Naive thymus-derived CD4-positive, alpha-beta T cell (primary cell): ENCODE measurements at regions of chr11 and their contacts with region 1.

Region 1: GRCh38 chr11:9314291-9315036 is at the start of gene TMEM41B:
- DNase-seq: peak; percentile 98 to 100 (median 98)
- ATAC-seq: peak; percentile 98
- H3K4me3 ChIP-seq: peak within 1 kb of the TSS; percentile 90
- H3K4me3 Mint-ChIP-seq: peak within 1 kb of the TSS; percentile 97 to 100 (median 99)
- H3K27ac ChIP-seq: peak within 1 kb of the TSS; percentile 88
- H3K27ac Mint-ChIP-seq: peak within 1 kb of the TSS; percentile 96 to 99 (median 98)
- H3K4me1 ChIP-seq: peaks cover 16 to 23% of the 10 kb centered on the region in 2 donors
- H3K4me1 Mint-ChIP-seq: peaks cover 19 to 49% (median 44%) of the 10 kb centered on the region in 7 donors
- H3K27me3 ChIP-seq: no peaks in the 10 kb centered on the region
- H3K27me3 Mint-ChIP-seq: peaks cover 6 to 29% (median 11%) of the 10 kb centered on the region in 5 donors
- total RNA-seq, gene TMEM41B: 33.9 to 73.7 (median 49.0) TPM

Region 2: GRCh38 chr11:8688414-8689362 is 625.8 kb before region 1 on chr11:
- CTCF ChIA-PET with region 1: no interaction called
- POLR2A ChIA-PET with region 1: no interaction called
- intact Hi-C with region 1: loop called in 1 of 2 experiments (anchors 10 kb)
- DNase-seq: peak; percentile 50 to 86 (median 61)
- ATAC-seq: peak; percentile 92
- H3K4me3 ChIP-seq: peak overlapping the region; percentile 80
- H3K4me3 Mint-ChIP-seq: peak overlapping the region; percentile 89 to 99 (median 96)
- H3K27ac ChIP-seq: peak overlapping the region; percentile 85
- H3K27ac Mint-ChIP-seq: peak overlapping the region; percentile 90 to 99 (median 96)
- H3K4me1 ChIP-seq: peaks cover 15 to 17% of the 10 kb centered on the region in 2 donors
- H3K4me1 Mint-ChIP-seq: peaks cover 20 to 63% (median 45%) of the 10 kb centered on the region in 7 donors
- H3K27me3 ChIP-seq: no peaks in the 10 kb centered on the region
- H3K27me3 Mint-ChIP-seq: no peaks in the 10 kb centered on the region

Region 3: DNA sequence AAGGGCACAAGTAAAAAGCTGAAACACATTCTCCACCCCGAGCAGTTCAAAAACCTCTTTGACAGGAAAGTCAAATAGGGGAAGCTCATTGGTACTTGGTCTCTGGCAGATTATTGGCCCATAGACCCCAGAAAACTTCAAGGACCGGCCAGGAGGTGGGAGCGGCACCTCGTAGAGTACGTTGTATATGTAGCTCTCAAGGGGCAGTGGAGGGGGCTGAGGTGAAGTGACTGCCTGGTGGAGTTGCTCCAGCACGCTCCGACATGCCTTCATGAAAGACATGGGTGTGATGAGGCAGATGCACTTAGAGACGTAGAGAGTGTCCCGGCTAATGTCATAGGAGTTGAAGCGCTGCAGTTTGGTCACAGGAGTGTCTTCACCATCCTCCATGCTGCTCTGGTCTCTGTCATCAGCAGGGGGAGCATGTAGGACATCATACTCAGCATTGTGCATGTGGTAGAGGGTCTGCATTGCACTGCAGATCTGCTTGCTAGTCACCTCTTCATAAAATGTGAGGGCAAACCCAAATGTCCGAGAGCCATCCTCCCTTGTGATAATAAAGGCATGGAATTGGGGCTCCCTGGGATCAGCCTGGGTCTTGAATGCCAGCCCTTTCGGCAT is 110.7 kb before region 1 on chr11:
- CTCF ChIA-PET with region 1: no interaction called
- POLR2A ChIA-PET with region 1: interaction called, 7 read pairs
- intact Hi-C with region 1: loop called in 1 of 2 experiments (anchors 1 kb)
- DNase-seq: peak in 7 of 9 donors; percentile 13 to 50 (median 24)
- ATAC-seq: peak; percentile 61
- H3K4me3 ChIP-seq: no peak overlapping the region
- H3K4me3 Mint-ChIP-seq: no peak overlapping the region
- H3K27ac ChIP-seq: no peak overlapping the region
- H3K27ac Mint-ChIP-seq: peak overlapping the region in 2 of 9 donors; percentile 9 to 50
- H3K4me1 ChIP-seq: no peaks in the 10 kb centered on the region
- H3K4me1 Mint-ChIP-seq: peaks cover 15 to 55% (median 26%) of the 10 kb centered on the region in 7 donors
- H3K27me3 ChIP-seq: no peaks in the 10 kb centered on the region
- H3K27me3 Mint-ChIP-seq: no peaks in the 10 kb centered on the region

Region 4: DNA sequence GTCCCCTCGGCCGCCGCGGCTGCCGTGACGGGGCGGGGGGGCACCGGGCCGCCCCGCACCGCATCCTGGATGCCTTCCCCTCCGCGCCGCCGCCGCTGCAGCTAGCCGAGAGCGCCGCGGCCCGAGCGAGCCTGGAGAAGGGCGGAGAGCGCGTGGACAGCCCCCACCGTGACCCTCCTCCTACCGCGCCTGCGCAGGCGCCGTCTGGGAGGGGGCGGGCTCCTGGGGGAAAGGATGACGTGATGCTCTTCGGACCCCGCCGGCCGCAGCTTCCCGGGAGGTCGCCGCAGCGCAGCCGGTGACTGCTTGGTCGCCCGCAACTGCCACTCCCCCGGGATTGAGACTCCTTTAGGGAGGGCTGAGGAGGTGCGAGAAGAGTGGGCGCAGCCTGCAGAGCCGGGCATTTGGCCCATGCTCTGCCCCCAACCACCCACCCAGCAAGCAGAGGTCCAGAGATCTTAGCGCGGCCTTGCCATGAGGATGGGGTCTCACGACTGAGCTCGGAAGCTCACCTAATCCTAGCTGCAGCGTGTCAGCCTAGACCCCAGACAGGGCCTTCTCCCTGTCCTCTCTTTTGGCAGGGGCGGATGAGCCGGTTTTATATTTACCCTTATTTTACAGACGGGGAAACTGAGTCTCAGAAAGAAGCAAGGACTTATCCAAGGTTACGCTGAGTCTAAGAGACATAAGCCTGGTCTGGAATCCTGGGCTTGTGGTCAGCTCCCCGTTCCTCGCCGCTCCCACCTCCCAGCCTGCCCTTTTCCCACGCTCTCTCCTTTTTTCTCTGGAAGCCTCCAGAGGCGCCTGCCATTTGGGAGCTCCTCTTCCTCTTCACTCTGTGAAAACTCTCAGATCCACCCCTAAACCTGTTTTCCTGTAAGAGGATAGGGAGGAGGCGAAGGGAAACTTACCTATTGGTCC is 49.0 kb before region 1 on chr11 and contains the start of gene DENND5A:
- CTCF ChIA-PET with region 1: no interaction called
- POLR2A ChIA-PET with region 1: interaction called, 12 read pairs
- intact Hi-C with region 1: loop called (anchors 1 kb)
- DNase-seq: peak; percentile 12 to 65 (median 34)
- ATAC-seq: peak; percentile 74
- H3K4me3 ChIP-seq: peak within 1 kb of the TSS; percentile 72
- H3K4me3 Mint-ChIP-seq: peak within 1 kb of the TSS; percentile 87 to 100 (median 97)
- H3K27ac ChIP-seq: peak within 1 kb of the TSS; percentile 72
- H3K27ac Mint-ChIP-seq: peak within 1 kb of the TSS; percentile 89 to 99 (median 95)
- H3K4me1 ChIP-seq: peaks cover 11 to 22% of the 10 kb centered on the region in 2 donors
- H3K4me1 Mint-ChIP-seq: peaks cover 25 to 43% (median 39%) of the 10 kb centered on the region in 7 donors
- H3K27me3 ChIP-seq: no peaks in the 10 kb centered on the region
- H3K27me3 Mint-ChIP-seq: peaks cover 0 to 46% (median 0%) of the 10 kb centered on the region in 5 donors
- total RNA-seq, gene DENND5A: 65.0 to 178 (median 108) TPM

Region 5: DNA sequence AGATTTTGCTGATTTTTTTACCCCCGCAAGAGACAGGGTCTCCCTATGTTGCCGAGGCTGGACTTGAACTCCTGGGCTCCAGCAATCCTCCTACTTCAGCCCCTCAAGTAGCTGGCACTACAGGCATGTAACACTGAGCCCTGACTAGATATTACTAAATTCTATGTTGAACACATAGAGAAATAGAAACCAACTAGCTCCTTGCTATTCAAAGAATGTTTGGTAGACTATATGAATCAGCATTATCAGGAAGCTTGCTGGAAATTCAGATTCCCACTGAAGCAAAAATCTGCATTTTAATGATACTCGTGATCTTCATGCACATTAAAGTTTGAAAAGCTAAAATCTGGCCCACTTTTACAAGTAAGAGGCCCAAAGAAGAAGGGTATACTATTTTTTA is 12.0 kb before region 1 on chr11:
- CTCF ChIA-PET with region 1: no interaction called
- POLR2A ChIA-PET with region 1: interaction called, 6 read pairs
- intact Hi-C with region 1: loop called in 1 of 2 experiments (anchors 2 kb)
- DNase-seq: no peak
- ATAC-seq: no peak
- H3K4me3 ChIP-seq: no peak overlapping the region
- H3K4me3 Mint-ChIP-seq: no peak overlapping the region
- H3K27ac ChIP-seq: no peak overlapping the region
- H3K27ac Mint-ChIP-seq: no peak overlapping the region
- H3K4me1 ChIP-seq: no peaks in the 10 kb centered on the region
- H3K4me1 Mint-ChIP-seq: peaks cover 3 to 25% (median 12%) of the 10 kb centered on the region in 7 donors
- H3K27me3 ChIP-seq: no peaks in the 10 kb centered on the region
- H3K27me3 Mint-ChIP-seq: no peaks in the 10 kb centered on the region

Region 6: DNA sequence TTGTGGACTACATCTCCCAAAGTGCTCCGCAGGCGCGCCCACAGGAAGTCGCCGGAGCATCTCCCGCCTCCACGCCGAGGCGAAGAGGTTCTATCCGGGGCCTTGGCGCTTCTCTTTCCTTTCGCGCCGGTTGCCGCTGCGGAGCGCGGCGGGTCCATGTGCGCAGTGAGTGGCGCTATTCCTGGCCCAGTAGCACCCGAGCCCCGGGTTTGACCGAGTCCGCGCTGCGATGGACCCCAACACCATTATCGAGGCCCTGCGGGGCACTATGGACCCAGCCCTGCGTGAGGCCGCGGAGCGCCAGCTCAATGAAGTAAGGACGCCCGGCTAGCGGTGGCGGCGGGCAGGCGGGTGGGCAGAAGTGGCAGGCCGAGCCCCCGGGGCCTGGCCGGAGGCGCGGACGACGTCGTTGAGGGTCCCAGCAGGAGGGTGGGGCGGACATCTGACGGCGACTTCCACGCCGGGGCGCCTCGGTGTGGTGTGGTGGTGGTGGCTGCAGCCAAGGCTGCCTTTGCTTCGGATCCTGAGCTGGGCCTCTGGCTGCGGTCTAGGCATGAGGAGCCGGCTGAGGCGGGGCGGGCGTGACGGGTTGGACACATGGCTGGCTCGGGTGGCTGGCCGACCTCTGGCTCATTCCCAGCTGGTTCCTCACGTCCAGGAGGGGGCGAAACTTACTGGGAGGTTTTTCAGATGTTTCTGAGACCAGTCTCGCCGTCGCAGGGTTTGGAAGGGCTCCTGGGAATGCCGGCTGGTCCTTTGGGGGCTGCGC is 70.3 kb after region 1 on chr11 and contains the start of gene IPO7:
- CTCF ChIA-PET with region 1: interaction called, 4 read pairs
- POLR2A ChIA-PET with region 1: interaction called, 29 read pairs
- intact Hi-C with region 1: loop called (anchors 1 kb)
- DNase-seq: peak; percentile 68 to 88 (median 84)
- ATAC-seq: peak; percentile 99
- H3K4me3 ChIP-seq: peak within 1 kb of the TSS; percentile 78
- H3K4me3 Mint-ChIP-seq: peak within 1 kb of the TSS; percentile 89 to 98 (median 94)
- H3K27ac ChIP-seq: peak within 1 kb of the TSS; percentile 88
- H3K27ac Mint-ChIP-seq: peak within 1 kb of the TSS; percentile 79 to 94 (median 91)
- H3K4me1 ChIP-seq: peaks cover 11 to 15% of the 10 kb centered on the region in 2 donors
- H3K4me1 Mint-ChIP-seq: peaks cover 25 to 51% (median 38%) of the 10 kb centered on the region in 7 donors
- H3K27me3 ChIP-seq: no peaks in the 10 kb centered on the region
- H3K27me3 Mint-ChIP-seq: no peaks in the 10 kb centered on the region
- total RNA-seq, gene IPO7: 47.3 to 105 (median 61.3) TPM